Activated naive CD4-positive, alpha-beta T cell treated with anti-CD3 and anti-CD28 coated beads for 36 hours (primary cell): ENCODE measurements at regions of chr15 and their contacts with region 1.

Region 1: DNA sequence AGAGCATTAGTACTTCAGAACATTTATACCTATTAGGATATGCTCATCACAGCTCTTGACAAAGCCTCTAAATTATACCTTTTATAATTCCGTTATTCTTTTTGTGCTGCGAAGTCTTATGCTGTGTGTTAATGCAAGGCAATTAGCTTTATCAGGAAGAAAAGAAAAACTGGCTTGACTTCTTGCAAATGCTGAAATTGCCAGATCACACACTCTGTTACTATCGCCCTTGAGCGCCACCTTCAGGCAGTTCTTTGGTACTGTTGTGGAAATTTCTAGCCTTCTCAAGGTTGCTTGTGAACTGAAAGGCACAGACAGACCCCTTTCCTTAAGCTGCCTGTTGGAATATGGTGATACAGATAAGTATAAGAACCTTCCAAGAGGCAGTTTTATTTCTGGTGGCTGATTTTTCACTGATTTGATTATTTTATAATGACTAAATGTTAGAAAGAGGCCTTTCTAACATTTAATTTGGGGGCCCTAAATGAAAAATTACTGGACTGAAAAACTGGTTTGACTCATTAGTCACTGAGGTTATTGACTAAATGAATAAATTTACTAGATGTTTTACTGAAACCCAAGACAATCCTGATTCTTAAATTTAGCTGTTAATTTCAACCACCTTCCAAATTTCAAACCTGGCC is 126.2 kb upstream of the RASGRP1 start:
- DNase-seq: peak; percentile 91
- H3K4me3 Mint-ChIP-seq: no peak overlapping the region
- H3K27ac Mint-ChIP-seq: no peak overlapping the region
- H3K4me1 Mint-ChIP-seq: peaks cover 63% of the 10 kb centered on the region
- H3K27me3 Mint-ChIP-seq: no peaks in the 10 kb centered on the region

Region 2: GRCh38 chr15:38252481-38253412 is 438.1 kb before region 1 on chr15 and contains the start of gene SPRED1:
- CTCF ChIA-PET with region 1: interaction called, 5 read pairs
- intact Hi-C with region 1: loop called (anchors 2 kb)
- DNase-seq: peak; percentile 30
- H3K4me3 Mint-ChIP-seq: peak within 1 kb of the TSS; percentile 84
- H3K27ac Mint-ChIP-seq: no peak within 1 kb of the TSS
- H3K4me1 Mint-ChIP-seq: peaks cover 19% of the 10 kb centered on the region
- H3K27me3 Mint-ChIP-seq: peaks cover 13% of the 10 kb centered on the region
- total RNA-seq, gene SPRED1: 0.62 to 0.74 TPM

Region 3: DNA sequence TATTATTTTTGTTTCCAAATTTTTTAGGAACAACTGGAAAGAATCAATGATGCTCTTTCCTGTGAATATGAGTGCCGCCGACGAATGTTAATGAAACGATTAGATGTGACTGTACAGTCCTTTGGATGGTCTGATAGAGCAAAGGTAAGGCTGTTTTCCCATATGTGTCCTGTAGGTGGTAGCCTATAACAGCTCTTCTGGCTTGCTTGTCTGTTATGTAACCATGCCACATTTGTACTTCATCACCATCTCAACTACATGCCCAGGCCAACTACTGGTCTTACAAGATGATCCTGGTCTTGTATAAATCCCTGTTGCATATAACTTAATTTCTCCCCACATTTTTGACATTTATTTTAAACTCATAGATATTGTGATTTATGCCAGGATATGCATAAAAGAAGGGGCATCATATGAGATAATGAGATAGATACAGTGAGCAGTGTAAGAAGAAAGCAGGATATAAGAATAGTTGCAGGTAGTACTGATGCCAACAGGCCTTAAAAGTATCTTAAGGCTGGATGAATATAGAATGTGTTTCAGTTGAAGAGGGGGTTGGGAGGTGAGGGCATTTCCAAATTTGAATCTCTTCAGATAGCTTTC is 216.6 kb before region 1 on chr15:
- CTCF ChIA-PET with region 1: interaction called, 58 read pairs
- intact Hi-C with region 1: loop called (anchors 1 kb)
- DNase-seq: peak; percentile 30
- H3K4me3 Mint-ChIP-seq: no peak overlapping the region
- H3K27ac Mint-ChIP-seq: peak overlapping the region; percentile 55
- H3K4me1 Mint-ChIP-seq: peaks cover 4% of the 10 kb centered on the region
- H3K27me3 Mint-ChIP-seq: no peaks in the 10 kb centered on the region

Region 4: GRCh38 chr15:38496151-38496550 is 194.7 kb before region 1 on chr15:
- CTCF ChIA-PET with region 1: interaction called, 13 read pairs
- intact Hi-C with region 1: no loop called
- DNase-seq: no peak
- H3K4me3 Mint-ChIP-seq: no peak overlapping the region
- H3K27ac Mint-ChIP-seq: peak overlapping the region; percentile 53
- H3K4me1 Mint-ChIP-seq: peaks cover 18% of the 10 kb centered on the region
- H3K27me3 Mint-ChIP-seq: no peaks in the 10 kb centered on the region

Region 5: GRCh38 chr15:38610748-38611147 is 80.1 kb before region 1 on chr15:
- CTCF ChIA-PET with region 1: interaction called, 3 read pairs
- intact Hi-C with region 1: loop called (anchors 2 kb)
- DNase-seq: peak; percentile 32
- H3K4me3 Mint-ChIP-seq: no peak overlapping the region
- H3K27ac Mint-ChIP-seq: peak overlapping the region; percentile 61
- H3K4me1 Mint-ChIP-seq: peaks cover 40% of the 10 kb centered on the region
- H3K27me3 Mint-ChIP-seq: no peaks in the 10 kb centered on the region

Region 6: DNA sequence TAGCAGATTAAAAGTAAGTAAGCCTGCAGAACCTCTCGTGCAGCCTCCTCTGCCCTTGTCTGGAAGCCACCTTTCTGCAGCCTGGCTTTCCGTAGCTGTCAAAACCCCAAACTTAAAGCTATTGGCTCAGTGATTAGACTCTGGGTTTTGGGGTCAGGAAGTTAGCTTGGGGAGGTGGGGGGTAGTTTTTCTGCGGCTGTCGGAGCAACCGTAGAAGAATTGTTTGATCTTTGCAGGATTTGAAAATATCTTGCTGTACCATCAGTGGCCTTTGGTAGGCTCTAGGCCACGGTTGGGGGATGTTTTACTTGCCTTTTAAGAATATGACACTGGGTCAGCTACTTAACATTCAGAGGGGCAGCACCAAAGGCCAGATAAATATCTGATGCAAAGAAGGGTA is 37.8 kb before region 1 on chr15:
- CTCF ChIA-PET with region 1: interaction called, 33 read pairs
- intact Hi-C with region 1: no loop called
- DNase-seq: peak; percentile 74
- H3K4me3 Mint-ChIP-seq: peak overlapping the region; percentile 66
- H3K27ac Mint-ChIP-seq: peak overlapping the region; percentile 81
- H3K4me1 Mint-ChIP-seq: peaks cover 70% of the 10 kb centered on the region
- H3K27me3 Mint-ChIP-seq: no peaks in the 10 kb centered on the region